Stomach (tissue), 19 donors: ENCODE measurements at regions of chr19 and their contacts with region 1.

Region 1: GRCh38 chr19:56321989-56322440 is 7.4 kb upstream of the ZSCAN5A start:
- DNase-seq: no peak
- H3K4me3 ChIP-seq: no peak overlapping the region
- H3K27ac ChIP-seq: peak overlapping the region in 2 of 5 donors; percentile 4 to 17
- H3K4me1 ChIP-seq: no peaks in the 10 kb centered on the region
- H3K27me3 ChIP-seq: no peaks in the 10 kb centered on the region
- CTCF ChIP-seq: no peak
- EP300 ChIP-seq: no peak
- POLR2A ChIP-seq: no peak

Region 2: DNA sequence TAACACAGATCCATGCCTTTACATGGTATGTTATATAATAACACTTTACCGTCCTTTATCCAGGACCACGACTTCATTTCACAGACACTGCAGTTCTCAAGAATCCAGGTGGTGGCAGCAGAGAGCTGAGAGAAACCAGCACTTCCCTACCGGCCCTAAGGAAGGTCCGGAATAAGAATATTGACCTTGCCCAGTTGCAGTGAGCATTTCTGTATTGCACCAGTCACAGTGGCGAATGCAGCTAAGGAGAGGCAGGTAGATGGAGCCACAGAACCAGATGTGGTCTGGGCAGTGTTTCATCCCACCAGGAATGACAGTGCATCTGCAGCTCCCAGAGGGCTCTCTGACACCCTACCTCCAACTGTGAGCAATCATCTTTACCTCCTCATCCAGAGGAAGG is 245.5 kb before region 1 on chr19:
- intact Hi-C with region 1: loop called (anchors 10 kb)
- DNase-seq: peak; percentile 72 to 82
- H3K4me3 ChIP-seq: no peak overlapping the region
- H3K27ac ChIP-seq: no peak overlapping the region
- H3K4me1 ChIP-seq: peaks cover 9 to 14% (median 9%) of the 10 kb centered on the region in 4 donors
- H3K27me3 ChIP-seq: peaks cover 0 to 9% (median 0%) of the 10 kb centered on the region in 3 donors
- CTCF ChIP-seq: peak in 5 of 7 experiments; percentile 70 to 84 (median 81)
- EP300 ChIP-seq: no peak
- POLR2A ChIP-seq: no peak

Region 3: DNA sequence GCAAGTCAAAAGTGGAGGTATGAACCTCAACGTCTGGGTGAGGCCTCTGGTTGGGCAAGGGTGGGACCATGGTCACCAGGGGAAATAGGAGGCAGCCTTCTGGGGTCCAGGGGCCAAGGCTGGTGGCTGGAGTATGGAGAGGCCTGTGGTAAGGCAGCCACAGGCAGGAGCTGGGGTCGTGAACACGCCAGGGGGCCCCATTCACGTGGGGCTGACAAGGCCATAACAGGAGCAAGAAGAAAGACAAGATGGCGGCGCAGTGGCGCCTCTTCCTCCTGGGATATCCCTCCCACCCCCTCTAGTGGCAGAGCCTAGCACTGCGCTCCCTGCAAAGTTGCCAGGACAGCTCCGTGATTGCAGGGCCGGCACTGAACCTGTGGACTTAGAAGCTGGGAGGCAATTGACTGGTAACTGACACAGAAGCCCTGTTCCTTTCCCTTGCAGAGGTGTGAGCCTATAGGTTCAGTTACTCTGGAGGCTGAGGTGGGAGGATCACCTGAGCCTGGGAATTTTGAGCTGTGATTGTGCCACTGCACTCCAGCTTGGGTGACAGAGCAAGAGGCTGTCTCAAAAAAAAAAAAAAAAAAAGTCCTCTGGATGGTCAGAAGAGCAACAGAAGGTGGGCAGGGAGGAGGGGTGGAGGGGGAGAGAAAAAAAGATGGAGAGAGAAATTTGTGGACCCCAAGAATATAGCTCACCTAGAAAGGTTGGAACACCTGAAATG is 69.2 kb before region 1 on chr19:
- intact Hi-C with region 1: no loop called
- DNase-seq: peak; percentile 79 to 87
- H3K4me3 ChIP-seq: no peak overlapping the region
- H3K27ac ChIP-seq: no peak overlapping the region
- H3K4me1 ChIP-seq: no peaks in the 10 kb centered on the region
- H3K27me3 ChIP-seq: peaks cover 0 to 7% (median 0%) of the 10 kb centered on the region in 3 donors
- CTCF ChIP-seq: peak in 5 of 7 experiments; percentile 61 to 82 (median 75)
- EP300 ChIP-seq: no peak
- POLR2A ChIP-seq: no peak